ENCODE measurements at regions of chr6 and their contacts with region 1.

Region 1: DNA sequence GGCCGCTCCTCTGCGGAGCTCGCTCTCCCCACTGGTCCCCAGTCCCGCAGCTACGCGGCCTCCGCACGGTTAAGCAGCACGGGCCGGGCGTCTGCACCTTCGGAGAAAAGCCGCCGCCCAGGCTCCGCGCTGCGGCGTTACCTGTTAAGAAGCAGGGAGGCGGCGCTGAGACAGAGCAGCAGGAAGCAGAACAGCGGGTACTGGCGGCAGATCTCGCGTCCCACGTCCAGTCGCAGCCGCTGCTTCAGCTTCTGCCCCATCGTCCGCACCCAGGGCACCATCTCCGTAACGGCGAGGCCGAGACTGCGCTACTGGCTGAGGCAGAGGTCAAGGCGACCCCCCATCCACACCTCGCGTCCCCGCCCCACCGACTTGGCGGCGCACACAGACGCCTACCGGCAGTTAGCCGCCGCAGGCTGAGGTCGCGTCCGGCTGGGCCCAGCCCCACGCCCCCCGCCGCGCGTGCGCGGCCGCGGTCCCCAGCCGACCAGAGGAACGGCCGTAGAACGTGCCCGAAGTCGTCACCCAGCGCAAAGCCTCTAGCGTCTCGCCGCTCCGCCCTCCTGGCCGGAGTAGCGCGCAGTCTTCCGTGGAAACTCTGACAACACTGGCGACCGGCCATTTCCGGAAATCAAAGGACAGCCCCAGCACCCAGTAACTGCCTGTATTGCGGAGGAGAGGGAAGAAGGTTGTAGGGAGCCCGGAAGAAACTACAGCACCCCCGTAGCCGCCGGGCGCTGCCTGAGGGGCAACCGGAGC is at the start of gene SNX14:
- DNase-seq: peak; percentile 74
- H3K4me3 ChIP-seq: peak within 1 kb of the TSS; percentile 69
- CTCF ChIP-seq: no peak

Region 2: GRCh38 chr6:85642774-85643536 is 49.3 kb after region 1 on chr6 and contains the start of gene SYNCRIP:
- in situ Hi-C with region 1: loop called (anchors 5 kb)
- DNase-seq: peak; percentile 94
- H3K4me3 ChIP-seq: peak within 1 kb of the TSS; percentile 98
- CTCF ChIP-seq: no peak

Region 3: GRCh38 chr6:85678602-85679444 is 85.2 kb after region 1 on chr6:
- in situ Hi-C with region 1: loop called (anchors 5 kb)
- DNase-seq: peak; percentile 98
- H3K4me3 ChIP-seq: peak overlapping the region; percentile 75
- CTCF ChIP-seq: no peak